GM12878 (cell line): ENCODE measurements at regions of chr2 and their contacts with region 1.

Region 1: GRCh38 chr2:134897932-134898331 is 20.7 kb upstream of the CCNT2 start:
- DNase-seq: no peak
- ATAC-seq: no peak
- H3K4me3 ChIP-seq: no peak overlapping the region
- H3K27ac ChIP-seq: no peak overlapping the region
- H3K4me1 ChIP-seq: no peaks in the 10 kb centered on the region
- H3K27me3 ChIP-seq: no peaks in the 10 kb centered on the region
- CTCF ChIP-seq: peak in 1 of 3 experiments; percentile 18; a peak in 2 of 6 replicates
- EP300 ChIP-seq: no peak
- POLR2A ChIP-seq: no peak
- RAD21 ChIP-seq: peak; percentile 66

Region 2: DNA sequence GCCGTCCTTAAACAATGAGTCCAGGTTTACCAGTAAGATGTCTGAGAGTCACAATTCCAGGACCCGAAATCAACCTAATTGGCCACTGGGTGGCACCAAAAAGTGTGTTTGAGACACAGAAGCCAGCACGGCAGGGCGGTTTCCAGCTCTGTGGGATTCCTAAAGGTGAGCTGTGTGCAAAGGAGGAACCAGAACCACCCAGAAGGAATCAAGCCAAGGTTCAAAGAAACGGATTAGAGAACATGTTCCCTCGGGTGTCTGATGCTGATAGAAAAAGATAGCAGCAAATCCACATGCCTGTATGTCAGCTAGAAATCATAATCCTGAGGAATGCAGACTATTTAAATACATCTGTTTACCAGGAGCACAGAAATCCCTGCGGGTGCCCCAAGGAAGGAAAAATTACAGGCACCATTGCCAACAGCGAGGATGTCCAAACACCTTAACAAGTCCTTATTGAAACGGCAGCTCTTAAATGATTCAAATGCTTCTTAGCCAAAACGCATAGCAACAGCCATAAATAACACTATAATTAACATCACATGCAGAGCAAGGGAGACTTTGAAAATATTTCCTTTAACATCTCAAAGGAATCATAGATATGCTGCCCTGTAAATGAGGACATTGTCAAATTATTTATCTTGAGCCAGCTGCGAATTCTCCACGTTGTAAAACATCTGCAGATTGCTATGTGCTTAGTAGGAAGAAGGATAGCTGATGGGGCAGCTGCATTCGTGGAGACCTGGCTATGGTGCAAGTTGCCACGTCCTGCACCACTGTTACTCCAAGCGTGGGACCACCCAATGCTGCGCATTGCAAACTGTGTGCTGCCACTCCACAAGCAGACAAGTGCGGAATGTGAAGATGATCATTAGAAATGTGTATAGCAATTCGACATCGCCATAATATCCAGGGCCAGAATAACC is 1010.9 kb before region 1 on chr2:
- CTCF ChIA-PET with region 1: interaction called, 3 read pairs
- POLR2A ChIA-PET with region 1: no interaction called
- RAD21 ChIA-PET with region 1: no interaction called
- SMC1A ChIA-PET with region 1: no interaction called
- in situ Hi-C with region 1: no loop called
- intact Hi-C with region 1: loop called (anchors 5 kb)
- DNase-seq: peak; percentile 21
- ATAC-seq: peak; percentile 94
- H3K4me3 ChIP-seq: no peak overlapping the region
- H3K27ac ChIP-seq: no peak overlapping the region
- H3K4me1 ChIP-seq: no peaks in the 10 kb centered on the region
- H3K27me3 ChIP-seq: no peaks in the 10 kb centered on the region; a peak in 2 of 4 replicates
- CTCF ChIP-seq: peak; percentile 57 to 76 (median 70); a peak in 5 of 6 replicates
- EP300 ChIP-seq: no peak
- POLR2A ChIP-seq: no peak
- RAD21 ChIP-seq: peak; percentile 84

Region 3: GRCh38 chr2:134460583-134460998 is 437.3 kb before region 1 on chr2:
- CTCF ChIA-PET with region 1: interaction called, 10 read pairs
- POLR2A ChIA-PET with region 1: no interaction called
- RAD21 ChIA-PET with region 1: interaction called, 6 read pairs
- SMC1A ChIA-PET with region 1: interaction called, 5 read pairs
- in situ Hi-C with region 1: loop called (anchors 5 kb)
- intact Hi-C with region 1: loop called (anchors 1 kb)
- DNase-seq: no peak
- ATAC-seq: peak; percentile 92
- H3K4me3 ChIP-seq: no peak overlapping the region
- H3K27ac ChIP-seq: no peak overlapping the region
- H3K4me1 ChIP-seq: no peaks in the 10 kb centered on the region
- H3K27me3 ChIP-seq: no peaks in the 10 kb centered on the region
- CTCF ChIP-seq: peak; percentile 67 to 76 (median 74)
- EP300 ChIP-seq: no peak
- POLR2A ChIP-seq: no peak
- RAD21 ChIP-seq: peak; percentile 76

Region 4: DNA sequence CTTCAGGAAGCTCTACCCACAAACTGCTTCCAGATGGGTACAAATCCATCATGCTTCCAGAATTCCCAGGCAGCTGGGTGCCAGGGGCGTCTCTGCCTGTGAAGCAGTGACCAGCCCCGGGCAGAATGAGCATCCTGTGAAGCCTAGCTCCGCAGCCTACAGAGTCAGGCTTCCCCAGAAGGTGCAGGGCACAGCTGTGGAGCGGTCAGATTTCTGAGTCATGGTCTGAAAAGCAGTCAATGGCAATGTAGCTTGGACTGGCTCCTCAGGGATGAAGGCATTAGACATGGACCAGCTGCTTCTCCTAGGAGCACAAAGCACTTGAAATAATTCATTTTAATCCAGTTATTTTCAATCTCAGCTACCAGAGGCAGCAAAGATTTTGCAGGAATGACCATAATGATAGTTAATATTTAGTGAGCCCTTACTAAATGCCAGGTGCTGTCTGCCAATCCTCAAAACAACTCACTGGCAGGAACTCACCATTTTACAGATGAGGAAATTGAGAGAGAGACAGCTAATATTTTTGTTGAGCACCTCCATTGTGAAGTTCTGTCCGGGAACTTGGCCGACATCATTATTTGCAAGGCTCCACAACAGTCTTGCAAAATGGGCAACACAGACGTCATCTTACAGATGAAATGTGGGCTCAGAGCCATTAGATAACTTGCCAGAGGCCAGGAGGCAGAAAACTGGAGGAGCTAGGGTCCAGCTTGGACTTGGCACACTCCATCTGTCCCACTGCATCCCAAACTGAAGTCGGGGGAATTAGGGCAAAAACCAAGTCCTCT is 27.8 kb before region 1 on chr2:
- CTCF ChIA-PET with region 1: no interaction called
- POLR2A ChIA-PET with region 1: no interaction called
- RAD21 ChIA-PET with region 1: no interaction called
- SMC1A ChIA-PET with region 1: no interaction called
- in situ Hi-C with region 1: no loop called
- intact Hi-C with region 1: no loop called
- DNase-seq: no peak
- ATAC-seq: no peak
- H3K4me3 ChIP-seq: no peak overlapping the region
- H3K27ac ChIP-seq: no peak overlapping the region
- H3K4me1 ChIP-seq: no peaks in the 10 kb centered on the region
- H3K27me3 ChIP-seq: no peaks in the 10 kb centered on the region
- CTCF ChIP-seq: no peak
- EP300 ChIP-seq: no peak
- POLR2A ChIP-seq: no peak
- RAD21 ChIP-seq: no peak

Region 5: GRCh38 chr2:135386993-135387392 is 489.1 kb after region 1 on chr2:
- CTCF ChIA-PET with region 1: no interaction called
- POLR2A ChIA-PET with region 1: no interaction called
- RAD21 ChIA-PET with region 1: no interaction called
- SMC1A ChIA-PET with region 1: no interaction called
- in situ Hi-C with region 1: no loop called
- intact Hi-C with region 1: no loop called
- DNase-seq: no peak
- ATAC-seq: no peak
- H3K4me3 ChIP-seq: no peak overlapping the region
- H3K27ac ChIP-seq: no peak overlapping the region
- H3K4me1 ChIP-seq: no peaks in the 10 kb centered on the region
- H3K27me3 ChIP-seq: no peaks in the 10 kb centered on the region
- CTCF ChIP-seq: no peak
- EP300 ChIP-seq: no peak
- POLR2A ChIP-seq: no peak
- RAD21 ChIP-seq: no peak